ENCODE measurements at regions of chr1 and their contacts with region 1.

Region 1: GRCh38 chr1:219298571-219299148 is 125.0 kb downstream of the LYPLAL1 start:
- DNase-seq: no peak
- ATAC-seq: no peak
- H3K4me3 ChIP-seq: no peak overlapping the region
- H3K27ac ChIP-seq: no peak overlapping the region
- H3K4me1 ChIP-seq: peaks cover 33% of the 10 kb centered on the region
- H3K27me3 ChIP-seq: no peaks in the 10 kb centered on the region
- CTCF ChIP-seq: no peak

Region 2: GRCh38 chr1:218809625-218810024 is 489.0 kb before region 1 on chr1:
- CTCF ChIA-PET with region 1: no interaction called
- POLR2A ChIA-PET with region 1: no interaction called
- intact Hi-C with region 1: no loop called
- DNase-seq: peak; percentile 19
- ATAC-seq: peak; percentile 71
- H3K4me3 ChIP-seq: no peak overlapping the region
- H3K27ac ChIP-seq: no peak overlapping the region
- H3K4me1 ChIP-seq: peaks cover 20% of the 10 kb centered on the region
- H3K27me3 ChIP-seq: no peaks in the 10 kb centered on the region
- CTCF ChIP-seq: no peak

Region 3: DNA sequence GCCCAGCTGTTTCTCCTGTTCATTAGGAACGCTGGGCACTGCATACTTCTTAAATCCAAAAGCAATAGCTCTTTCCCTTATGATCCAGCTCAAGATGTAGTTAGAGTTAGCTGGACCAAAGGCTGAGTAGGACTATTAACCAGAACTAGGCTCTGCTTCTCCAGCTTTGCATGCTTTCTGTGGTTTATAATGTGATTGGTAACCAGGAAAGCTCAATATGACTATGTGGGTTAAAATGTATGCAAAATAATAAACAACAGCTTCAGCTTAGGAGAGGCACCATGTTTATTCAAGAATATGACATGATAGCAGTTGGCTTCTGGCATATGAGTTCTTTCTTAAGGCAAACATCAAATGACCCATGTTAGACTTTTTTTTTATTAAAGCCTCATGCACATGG is 51.2 kb before region 1 on chr1:
- CTCF ChIA-PET with region 1: no interaction called
- POLR2A ChIA-PET with region 1: no interaction called
- intact Hi-C with region 1: no loop called
- DNase-seq: no peak
- ATAC-seq: no peak
- H3K4me3 ChIP-seq: no peak overlapping the region
- H3K27ac ChIP-seq: no peak overlapping the region
- H3K4me1 ChIP-seq: no peaks in the 10 kb centered on the region
- H3K27me3 ChIP-seq: no peaks in the 10 kb centered on the region
- CTCF ChIP-seq: no peak

Region 4: DNA sequence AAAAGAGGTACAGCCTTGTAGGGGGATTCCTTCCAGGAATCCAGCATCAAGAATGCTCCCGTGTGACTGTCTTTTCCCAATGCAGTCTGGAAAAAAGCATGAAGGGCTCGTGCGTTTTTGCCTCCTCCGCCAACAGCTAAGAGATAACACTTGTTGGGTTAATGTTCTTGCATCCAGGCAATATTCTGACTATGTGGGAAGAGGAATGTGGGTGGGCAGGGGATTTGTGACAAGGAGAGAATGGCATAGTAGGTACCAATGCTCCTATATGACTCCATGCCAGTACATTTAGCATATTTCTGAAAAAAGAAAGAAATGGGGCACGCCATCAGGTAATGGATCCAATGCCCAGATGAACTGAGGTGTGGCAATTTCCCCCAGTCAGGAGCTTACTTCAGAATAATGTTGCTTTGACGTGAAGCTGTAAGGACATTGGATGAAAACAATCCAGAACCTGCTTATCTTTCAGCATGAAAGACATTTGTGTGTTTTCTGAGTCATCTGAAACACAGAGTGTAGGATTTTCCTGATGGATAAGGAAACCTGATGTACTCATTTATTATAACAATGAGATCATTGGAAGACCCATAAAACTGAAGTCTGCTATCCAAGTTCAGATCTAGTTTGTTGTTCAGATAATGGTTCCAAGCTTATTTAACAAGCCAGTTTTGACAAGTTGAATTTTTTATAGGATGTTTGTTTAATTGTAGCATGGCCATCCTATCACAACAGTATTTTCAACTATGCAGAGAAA is 19.5 kb before region 1 on chr1:
- CTCF ChIA-PET with region 1: no interaction called
- POLR2A ChIA-PET with region 1: interaction called, 3 read pairs
- intact Hi-C with region 1: loop called (anchors 1 kb)
- DNase-seq: peak; percentile 99
- ATAC-seq: peak; percentile 91
- H3K4me3 ChIP-seq: no peak overlapping the region
- H3K27ac ChIP-seq: peak overlapping the region; percentile 77
- H3K4me1 ChIP-seq: peaks cover 38% of the 10 kb centered on the region
- H3K27me3 ChIP-seq: no peaks in the 10 kb centered on the region
- CTCF ChIP-seq: no peak

Region 5: DNA sequence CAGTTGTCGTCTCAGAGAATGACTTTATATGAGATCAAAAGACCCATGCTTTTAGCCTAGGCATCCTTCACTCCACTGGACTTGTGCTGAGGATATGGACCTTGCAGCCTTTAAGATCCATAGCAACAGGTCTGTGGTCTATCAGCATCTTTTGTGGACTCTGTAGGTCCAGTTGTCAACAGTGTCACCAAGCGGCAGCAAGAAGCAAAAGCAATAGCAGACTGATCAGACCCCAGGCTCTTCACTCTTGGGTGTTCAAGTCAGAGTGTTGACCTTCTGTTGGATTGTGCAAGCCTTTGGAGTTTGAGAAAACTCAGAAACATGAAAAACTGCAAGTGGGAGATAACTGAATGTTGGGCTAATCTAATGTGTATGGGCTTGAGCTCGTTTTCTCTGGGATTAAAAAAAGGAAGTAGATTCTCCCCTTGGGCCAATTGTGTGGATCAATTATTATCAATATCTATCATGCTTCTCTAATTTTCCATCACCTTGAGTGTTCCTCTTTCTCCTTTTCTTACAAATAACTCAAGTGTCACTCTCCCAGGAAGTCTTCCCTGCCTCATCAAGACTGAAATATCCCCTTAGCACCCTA is 19.2 kb after region 1 on chr1:
- CTCF ChIA-PET with region 1: no interaction called
- POLR2A ChIA-PET with region 1: no interaction called
- intact Hi-C with region 1: loop called (anchors 1 kb)
- DNase-seq: peak; percentile 82
- ATAC-seq: peak; percentile 59
- H3K4me3 ChIP-seq: no peak overlapping the region
- H3K27ac ChIP-seq: no peak overlapping the region
- H3K4me1 ChIP-seq: peaks cover 16% of the 10 kb centered on the region
- H3K27me3 ChIP-seq: no peaks in the 10 kb centered on the region
- CTCF ChIP-seq: peak; percentile 98

Region 6: DNA sequence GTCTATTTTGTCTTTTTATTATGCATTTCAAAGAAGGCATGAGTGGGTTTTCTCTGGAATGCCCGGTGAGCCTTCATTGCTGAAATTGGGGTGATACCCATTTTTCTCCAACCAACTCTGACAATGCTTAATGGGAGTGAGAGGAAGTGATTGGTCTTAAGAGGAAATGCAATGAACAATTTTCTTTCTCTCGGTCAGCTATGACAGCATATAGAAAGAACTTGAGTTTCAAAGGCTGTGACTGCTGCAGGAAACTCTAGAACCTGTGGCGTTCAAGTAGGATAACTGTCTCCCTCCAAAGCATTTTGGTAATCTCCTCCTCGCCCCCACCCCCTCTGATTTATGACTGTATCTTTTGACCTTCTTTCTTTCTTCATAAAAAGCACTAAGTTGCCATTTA is 30.9 kb after region 1 on chr1:
- CTCF ChIA-PET with region 1: no interaction called
- POLR2A ChIA-PET with region 1: no interaction called
- intact Hi-C with region 1: no loop called
- DNase-seq: peak; percentile 58
- ATAC-seq: no peak
- H3K4me3 ChIP-seq: no peak overlapping the region
- H3K27ac ChIP-seq: no peak overlapping the region
- H3K4me1 ChIP-seq: peaks cover 23% of the 10 kb centered on the region
- H3K27me3 ChIP-seq: no peaks in the 10 kb centered on the region
- CTCF ChIP-seq: no peak

Region 7: DNA sequence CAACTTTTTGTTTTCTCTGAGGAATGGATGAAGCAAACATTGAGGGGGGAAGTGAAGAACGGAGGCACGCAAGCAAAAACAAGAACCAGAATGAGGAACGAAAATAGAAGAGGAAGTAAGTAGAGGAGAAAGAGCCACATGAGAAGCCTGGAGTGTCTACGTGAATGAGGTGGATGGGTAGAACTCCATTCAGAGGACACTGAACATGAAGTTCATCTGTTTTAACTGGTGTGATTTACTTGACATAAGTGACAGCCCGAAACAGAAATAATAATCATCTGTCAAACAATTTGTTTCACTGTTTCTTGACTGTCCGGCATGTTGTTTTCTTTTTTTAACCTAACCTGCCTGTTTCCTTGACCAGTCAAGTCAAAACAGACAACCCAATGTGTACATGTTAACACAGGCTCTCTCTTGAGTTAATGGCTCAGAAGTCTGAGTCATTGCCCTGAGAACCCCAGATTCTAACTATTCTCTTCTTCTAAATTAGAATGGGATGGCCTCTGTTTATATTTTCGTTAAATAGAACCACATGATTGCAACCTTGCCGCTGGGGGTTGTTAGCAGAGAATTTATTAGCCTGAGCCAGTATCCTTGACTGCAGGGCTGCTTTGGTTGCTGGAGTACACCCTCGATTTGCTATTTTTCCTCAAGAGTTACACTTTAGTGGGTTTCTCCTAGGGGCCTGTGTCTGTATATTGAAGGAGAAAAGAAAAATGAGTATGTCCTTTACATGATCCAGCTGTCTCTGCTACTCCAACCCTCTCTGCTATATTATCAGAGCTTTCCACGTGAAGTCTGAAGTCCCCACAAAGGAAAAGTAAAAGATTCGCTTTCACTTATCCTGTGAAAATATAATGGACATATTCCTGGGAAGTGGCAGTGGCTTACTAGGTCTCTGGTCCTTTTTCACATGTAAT is 162.5 kb after region 1 on chr1:
- CTCF ChIA-PET with region 1: no interaction called
- POLR2A ChIA-PET with region 1: no interaction called
- intact Hi-C with region 1: no loop called
- DNase-seq: no peak
- ATAC-seq: no peak
- H3K4me3 ChIP-seq: no peak overlapping the region
- H3K27ac ChIP-seq: no peak overlapping the region
- H3K4me1 ChIP-seq: peaks cover 10% of the 10 kb centered on the region
- H3K27me3 ChIP-seq: no peaks in the 10 kb centered on the region
- CTCF ChIP-seq: no peak

Measured in PC-3 (cell line).